CD4-positive, alpha-beta memory T cell (primary cell): ENCODE measurements at regions of chr11 and their contacts with region 1.

Region 1: GRCh38 chr11:19553683-19554333 is 158.8 kb upstream of the NAV2 start:
- DNase-seq: peak; percentile 35 to 51 (median 43)
- H3K4me3 ChIP-seq: no peak overlapping the region
- H3K4me3 Mint-ChIP-seq: no peak overlapping the region
- H3K27ac ChIP-seq: no peak overlapping the region
- H3K27ac Mint-ChIP-seq: no peak overlapping the region
- H3K4me1 ChIP-seq: no peaks in the 10 kb centered on the region
- H3K4me1 Mint-ChIP-seq: peaks cover 0 to 4% (median 2%) of the 10 kb centered on the region in 4 donors
- H3K27me3 ChIP-seq: no peaks in the 10 kb centered on the region
- H3K27me3 Mint-ChIP-seq: peaks cover 4 to 13% of the 10 kb centered on the region in 2 donors

Region 2: GRCh38 chr11:19474954-19475715 is 78.7 kb before region 1 on chr11:
- CTCF ChIA-PET with region 1: no interaction called
- POLR2A ChIA-PET with region 1: no interaction called
- intact Hi-C with region 1: no loop called
- DNase-seq: no peak
- H3K4me3 ChIP-seq: no peak overlapping the region
- H3K4me3 Mint-ChIP-seq: no peak overlapping the region
- H3K27ac ChIP-seq: no peak overlapping the region
- H3K27ac Mint-ChIP-seq: no peak overlapping the region
- H3K4me1 ChIP-seq: no peaks in the 10 kb centered on the region
- H3K4me1 Mint-ChIP-seq: no peaks in the 10 kb centered on the region
- H3K27me3 ChIP-seq: no peaks in the 10 kb centered on the region
- H3K27me3 Mint-ChIP-seq: peaks cover 10 to 12% of the 10 kb centered on the region in 2 donors

Region 3: DNA sequence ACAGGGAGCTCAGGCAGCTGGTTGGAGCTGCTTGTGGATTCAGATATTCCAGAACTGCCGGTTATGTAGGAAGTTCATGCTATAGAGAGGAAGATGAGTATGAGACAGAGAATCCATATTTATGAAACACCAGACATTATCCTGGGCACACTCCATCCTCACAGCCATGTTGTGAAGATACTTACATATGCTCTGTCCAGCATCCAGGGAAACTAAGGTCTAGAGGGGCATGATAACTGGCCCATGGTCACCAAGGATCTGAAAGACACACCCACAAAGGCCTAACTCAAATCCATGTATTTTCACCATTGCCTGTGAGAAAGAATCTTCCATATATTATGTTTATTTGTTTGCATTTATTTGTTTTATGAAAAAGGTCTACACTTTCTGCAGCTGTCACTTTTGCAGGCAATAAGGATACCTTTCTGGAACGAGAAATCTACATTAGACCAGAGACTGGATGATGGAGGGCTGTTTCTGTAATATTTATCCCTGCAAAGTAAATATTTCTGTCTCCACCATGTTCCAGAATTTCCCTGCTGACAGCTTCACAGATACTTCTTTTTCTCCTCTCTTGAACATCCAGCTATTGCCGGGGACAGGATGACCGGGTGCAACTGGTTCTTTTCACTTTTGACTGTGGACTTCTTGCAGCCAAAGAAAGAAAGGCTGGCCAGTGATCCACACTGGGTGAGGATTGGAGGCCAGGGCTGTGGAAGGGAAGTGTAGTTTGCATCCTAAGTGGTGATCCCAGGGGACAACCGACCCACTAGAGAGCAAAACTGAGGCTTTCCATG is 13.0 kb after region 1 on chr11:
- CTCF ChIA-PET with region 1: interaction called, 23 read pairs
- POLR2A ChIA-PET with region 1: no interaction called
- intact Hi-C with region 1: no loop called
- DNase-seq: no peak
- H3K4me3 ChIP-seq: no peak overlapping the region
- H3K4me3 Mint-ChIP-seq: no peak overlapping the region
- H3K27ac ChIP-seq: no peak overlapping the region
- H3K27ac Mint-ChIP-seq: no peak overlapping the region
- H3K4me1 ChIP-seq: no peaks in the 10 kb centered on the region
- H3K4me1 Mint-ChIP-seq: no peaks in the 10 kb centered on the region
- H3K27me3 ChIP-seq: no peaks in the 10 kb centered on the region
- H3K27me3 Mint-ChIP-seq: peaks cover 5 to 17% of the 10 kb centered on the region in 2 donors

Region 4: DNA sequence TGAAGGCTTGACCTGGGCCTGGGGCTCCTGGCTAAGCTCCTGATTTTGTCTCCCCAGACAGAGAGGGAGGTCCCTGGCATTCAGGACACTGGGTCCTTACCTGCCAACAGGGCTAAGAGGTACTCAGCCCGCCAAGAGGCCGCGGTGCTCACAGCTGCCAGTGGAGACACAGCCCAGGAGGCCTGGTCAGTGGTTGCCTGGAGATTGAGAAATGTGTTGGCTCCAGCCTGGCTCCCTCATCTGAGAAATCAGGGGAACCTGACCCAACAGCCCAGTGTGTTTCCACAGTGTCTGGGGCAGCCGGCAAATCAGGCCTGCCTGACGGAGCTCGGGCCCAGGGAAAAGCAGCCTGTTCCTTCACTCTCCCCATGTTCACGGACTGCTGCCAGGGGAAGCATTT is 79.5 kb after region 1 on chr11:
- CTCF ChIA-PET with region 1: no interaction called
- POLR2A ChIA-PET with region 1: no interaction called
- intact Hi-C with region 1: no loop called
- DNase-seq: no peak
- H3K4me3 ChIP-seq: no peak overlapping the region
- H3K4me3 Mint-ChIP-seq: no peak overlapping the region
- H3K27ac ChIP-seq: no peak overlapping the region
- H3K27ac Mint-ChIP-seq: no peak overlapping the region
- H3K4me1 ChIP-seq: no peaks in the 10 kb centered on the region
- H3K4me1 Mint-ChIP-seq: no peaks in the 10 kb centered on the region
- H3K27me3 ChIP-seq: no peaks in the 10 kb centered on the region
- H3K27me3 Mint-ChIP-seq: peaks cover 8 to 16% of the 10 kb centered on the region in 2 donors

Region 5: GRCh38 chr11:19808076-19808911 is 254.5 kb after region 1 on chr11:
- CTCF ChIA-PET with region 1: interaction called, 3 read pairs
- POLR2A ChIA-PET with region 1: no interaction called
- intact Hi-C with region 1: loop called (anchors 1 kb)
- DNase-seq: no peak
- H3K4me3 ChIP-seq: no peak overlapping the region
- H3K4me3 Mint-ChIP-seq: no peak overlapping the region
- H3K27ac ChIP-seq: no peak overlapping the region
- H3K27ac Mint-ChIP-seq: no peak overlapping the region
- H3K4me1 ChIP-seq: no peaks in the 10 kb centered on the region
- H3K4me1 Mint-ChIP-seq: no peaks in the 10 kb centered on the region
- H3K27me3 ChIP-seq: no peaks in the 10 kb centered on the region
- H3K27me3 Mint-ChIP-seq: peaks cover 2 to 4% of the 10 kb centered on the region in 2 donors

Region 6: DNA sequence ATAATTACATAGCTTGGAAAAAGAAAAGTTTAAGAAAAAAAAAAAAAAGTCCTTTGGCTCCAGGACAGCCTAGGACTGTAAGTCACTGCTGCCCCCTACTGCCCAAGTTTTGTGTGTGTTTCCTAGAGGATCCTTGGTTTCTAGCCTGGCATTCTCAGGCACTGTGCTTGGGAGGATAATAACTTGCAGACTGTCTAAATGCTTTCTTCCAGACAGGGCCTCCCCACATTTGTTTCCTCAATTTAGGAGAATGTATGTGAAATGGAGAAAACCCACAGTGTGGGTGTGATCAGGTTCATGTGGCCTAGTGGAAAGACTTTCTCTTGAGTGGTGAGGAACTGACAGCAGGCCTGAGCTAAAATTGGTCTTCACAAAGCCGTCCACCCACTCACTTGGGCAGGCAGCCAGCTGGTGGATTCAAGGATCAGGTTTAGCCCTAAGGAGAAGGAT is 349.8 kb after region 1 on chr11:
- CTCF ChIA-PET with region 1: interaction called, 20 read pairs
- POLR2A ChIA-PET with region 1: no interaction called
- intact Hi-C with region 1: loop called (anchors 1 kb)
- DNase-seq: peak in 4 of 5 donors; percentile 8 to 27 (median 19)
- H3K4me3 ChIP-seq: no peak overlapping the region
- H3K4me3 Mint-ChIP-seq: no peak overlapping the region
- H3K27ac ChIP-seq: no peak overlapping the region
- H3K27ac Mint-ChIP-seq: no peak overlapping the region
- H3K4me1 ChIP-seq: no peaks in the 10 kb centered on the region
- H3K4me1 Mint-ChIP-seq: no peaks in the 10 kb centered on the region
- H3K27me3 ChIP-seq: no peaks in the 10 kb centered on the region
- H3K27me3 Mint-ChIP-seq: peaks cover 0 to 2% of the 10 kb centered on the region in 2 donors